Activated naive CD8-positive, alpha-beta T cell treated with anti-CD3 and anti-CD28 coated beads, Interleukin-2, amount 10 ng/mL, durations not matched to agents 7 days and 5 days (primary cell): ENCODE measurements at regions of chr11 and their contacts with region 1.

Region 1: GRCh38 chr11:61392981-61393595 is 701 bp downstream of the TMEM216 start:
- DNase-seq: no peak
- ATAC-seq: peak; percentile 25
- H3K4me3 Mint-ChIP-seq: peak overlapping the region; percentile 91
- H3K27ac Mint-ChIP-seq: peak overlapping the region; percentile 90
- H3K4me1 Mint-ChIP-seq: peaks cover 22% of the 10 kb centered on the region
- H3K27me3 Mint-ChIP-seq: no peaks in the 10 kb centered on the region

Region 2: DNA sequence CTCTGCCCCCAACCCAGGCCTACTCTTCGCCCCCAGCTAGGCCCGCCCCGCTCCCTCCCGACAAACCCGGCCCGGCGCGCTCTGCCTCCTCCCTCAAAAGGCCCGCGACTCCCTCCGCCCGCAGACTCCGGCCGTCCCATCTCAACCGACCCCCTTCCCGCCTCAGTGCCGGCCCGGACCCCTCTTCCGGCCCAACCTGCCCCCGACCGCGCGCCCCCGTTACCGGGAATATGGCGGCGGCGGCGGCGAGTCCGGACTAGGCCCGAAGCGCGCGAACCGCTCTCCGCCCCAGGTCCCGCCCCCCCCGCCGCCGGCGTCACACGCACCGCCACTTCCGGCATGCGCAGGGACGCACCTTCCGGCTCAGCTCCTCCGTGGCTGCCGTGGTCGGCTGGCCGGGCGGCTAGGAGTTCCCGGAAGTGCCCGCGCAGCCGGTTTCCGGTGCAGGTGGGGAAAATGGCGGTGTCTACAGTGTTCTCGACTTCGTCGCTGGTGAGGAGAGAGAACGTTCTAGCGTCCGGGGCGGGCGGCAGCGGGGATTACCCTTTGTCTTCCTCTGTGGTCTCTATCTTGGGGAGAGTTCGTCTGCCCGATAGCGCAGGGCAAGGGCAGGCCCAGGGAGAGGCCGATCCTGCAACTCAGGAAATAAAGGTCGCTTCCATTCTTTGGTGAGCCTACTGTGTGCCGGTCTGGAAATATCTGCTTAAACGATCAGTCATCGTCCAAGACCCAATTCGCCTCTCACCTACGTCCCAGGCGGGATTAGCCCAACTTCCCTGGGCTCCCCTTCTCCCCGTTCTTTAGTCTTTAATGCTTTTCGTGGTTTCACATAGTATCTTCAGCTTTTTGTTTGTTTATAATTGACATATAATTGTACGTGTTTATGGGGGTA is 36.8 kb after region 1 on chr11 and contains the starts of genes CPSF7 and SDHAF2:
- POLR2A ChIA-PET with region 1: interaction called, 22 read pairs
- DNase-seq: peak; percentile 99
- ATAC-seq: peak; percentile 87
- H3K4me3 Mint-ChIP-seq: peak within 1 kb of the TSS; percentile 99
- H3K27ac Mint-ChIP-seq: peak within 1 kb of the TSS; percentile 100
- H3K4me1 Mint-ChIP-seq: peaks cover 51% of the 10 kb centered on the region
- H3K27me3 Mint-ChIP-seq: no peaks in the 10 kb centered on the region
- total RNA-seq, gene CPSF7: 115 to 118 TPM
- total RNA-seq, gene SDHAF2: 48.5 to 53.1 TPM

Region 3: GRCh38 chr11:61602775-61603569 is 209.9 kb after region 1 on chr11:
- POLR2A ChIA-PET with region 1: no interaction called
- DNase-seq: no peak
- ATAC-seq: no peak
- H3K4me3 Mint-ChIP-seq: no peak overlapping the region
- H3K27ac Mint-ChIP-seq: no peak overlapping the region
- H3K4me1 Mint-ChIP-seq: no peaks in the 10 kb centered on the region
- H3K27me3 Mint-ChIP-seq: peaks cover 21% of the 10 kb centered on the region